ENCODE measurements at regions of chr13 and their contacts with region 1.

Region 1: DNA sequence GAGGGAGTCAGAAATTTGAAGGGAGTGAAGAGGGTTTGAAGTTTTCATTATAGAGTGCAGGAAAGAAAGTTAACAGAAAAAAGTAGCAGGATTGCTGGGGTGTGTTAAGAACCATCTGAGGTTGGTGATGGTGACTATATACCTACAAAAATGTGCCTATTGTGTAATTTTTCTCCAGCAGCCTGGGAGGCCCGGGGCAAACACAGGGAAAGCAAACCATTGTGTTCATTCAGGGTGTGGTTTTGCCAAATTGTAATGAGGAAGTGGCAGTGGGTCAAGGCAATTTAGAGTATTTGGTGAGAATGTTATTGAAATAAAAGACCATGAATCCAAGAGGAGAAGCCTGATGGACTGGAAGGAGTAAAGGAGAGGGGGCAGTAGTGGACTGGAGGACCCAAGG is 8.2 kb upstream of the SUCLA2 start:
- DNase-seq: peak; percentile 78
- ATAC-seq: peak; percentile 96
- H3K4me3 ChIP-seq: no peak overlapping the region
- H3K27ac ChIP-seq: peak overlapping the region; percentile 74
- H3K4me1 ChIP-seq: peaks cover 26% of the 10 kb centered on the region
- H3K27me3 ChIP-seq: no peaks in the 10 kb centered on the region
- CTCF ChIP-seq: no peak

Region 2: DNA sequence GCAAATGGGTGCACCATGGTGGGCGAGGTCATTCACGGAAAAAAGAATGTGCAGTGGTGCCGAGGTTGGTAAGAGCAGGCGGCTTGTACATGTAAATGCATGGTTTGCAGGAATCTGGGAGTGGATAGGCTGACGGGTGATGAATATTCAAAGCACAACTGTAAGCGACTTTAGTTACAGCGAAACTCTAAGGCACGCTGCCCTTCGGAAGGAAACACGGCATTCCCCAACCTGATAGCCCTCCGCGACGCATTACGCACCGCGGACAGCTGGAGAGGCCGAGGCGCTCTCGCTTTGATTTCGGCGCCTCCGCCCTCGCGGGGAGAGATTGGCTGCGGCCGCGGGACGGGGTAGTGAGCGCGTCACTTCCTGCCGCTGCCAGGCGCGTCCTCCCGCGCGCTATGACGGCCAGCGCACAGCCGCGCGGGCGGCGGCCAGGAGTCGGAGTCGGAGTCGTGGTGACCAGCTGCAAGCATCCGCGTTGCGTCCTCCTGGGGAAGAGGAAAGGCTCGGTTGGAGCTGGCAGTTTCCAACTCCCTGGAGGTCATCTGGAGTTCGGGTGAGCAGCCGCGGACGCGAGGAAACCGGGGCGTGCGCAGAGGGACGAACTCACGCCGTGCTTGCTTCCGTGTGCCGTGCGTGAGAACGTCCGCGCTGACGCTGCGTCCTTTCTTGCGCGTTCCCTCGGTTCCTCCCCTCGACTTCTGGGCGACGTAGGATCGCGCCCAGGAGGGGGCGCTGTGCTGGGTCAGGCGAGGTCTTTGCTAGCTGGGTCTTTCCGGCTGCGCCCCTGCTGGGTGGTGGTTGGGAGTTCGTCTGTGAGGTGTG is 28.3 kb after region 1 on chr13 and contains the start of gene NUDT15:
- CTCF ChIA-PET with region 1: no interaction called
- POLR2A ChIA-PET with region 1: no interaction called
- intact Hi-C with region 1: loop called (anchors 2 kb)
- DNase-seq: peak; percentile 92
- ATAC-seq: peak; percentile 94
- H3K4me3 ChIP-seq: peak within 1 kb of the TSS; percentile 79
- H3K27ac ChIP-seq: peak within 1 kb of the TSS; percentile 95
- H3K4me1 ChIP-seq: peaks cover 30% of the 10 kb centered on the region
- H3K27me3 ChIP-seq: no peaks in the 10 kb centered on the region
- CTCF ChIP-seq: peak; percentile 90
- total RNA-seq, gene NUDT15: 22.2 and 27.0 TPM in 2 replicates

Measured in PC-3 (cell line).